ENCODE measurements at regions of chr18 and their contacts with region 1.

Region 1: DNA sequence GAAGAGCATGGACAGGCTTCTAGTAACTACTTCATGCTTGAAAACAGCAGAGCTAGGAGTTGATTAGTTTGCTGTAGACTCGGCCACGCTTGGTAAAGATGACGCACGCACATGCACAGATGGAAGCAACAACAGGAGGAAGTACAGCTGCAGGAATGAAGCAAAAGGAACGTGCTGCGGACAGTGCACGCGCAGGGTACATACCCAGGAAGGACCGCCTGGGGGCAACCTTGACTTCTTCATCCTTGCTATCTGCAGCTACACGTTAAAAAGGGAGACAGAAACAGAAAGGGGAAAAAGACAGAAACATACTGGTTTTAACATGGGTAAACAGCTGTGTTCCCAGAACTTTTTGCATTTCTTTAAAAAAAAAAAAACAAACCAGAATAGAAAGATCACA is 17.7 kb downstream of the SLC66A2 start:
- DNase-seq: peak; percentile 71
- ATAC-seq: peak; percentile 98
- H3K4me3 ChIP-seq: no peak overlapping the region
- H3K27ac ChIP-seq: no peak overlapping the region
- H3K4me1 ChIP-seq: no peaks in the 10 kb centered on the region
- H3K27me3 ChIP-seq: no peaks in the 10 kb centered on the region
- CTCF ChIP-seq: peak; percentile 61

Region 2: GRCh38 chr18:79905389-79905911 is 28.3 kb before region 1 on chr18:
- CTCF ChIA-PET with region 1: no interaction called
- POLR2A ChIA-PET with region 1: no interaction called
- intact Hi-C with region 1: no loop called
- DNase-seq: no peak
- ATAC-seq: no peak
- H3K4me3 ChIP-seq: no peak overlapping the region
- H3K27ac ChIP-seq: no peak overlapping the region
- H3K4me1 ChIP-seq: no peaks in the 10 kb centered on the region
- H3K27me3 ChIP-seq: no peaks in the 10 kb centered on the region
- CTCF ChIP-seq: no peak

Region 3: DNA sequence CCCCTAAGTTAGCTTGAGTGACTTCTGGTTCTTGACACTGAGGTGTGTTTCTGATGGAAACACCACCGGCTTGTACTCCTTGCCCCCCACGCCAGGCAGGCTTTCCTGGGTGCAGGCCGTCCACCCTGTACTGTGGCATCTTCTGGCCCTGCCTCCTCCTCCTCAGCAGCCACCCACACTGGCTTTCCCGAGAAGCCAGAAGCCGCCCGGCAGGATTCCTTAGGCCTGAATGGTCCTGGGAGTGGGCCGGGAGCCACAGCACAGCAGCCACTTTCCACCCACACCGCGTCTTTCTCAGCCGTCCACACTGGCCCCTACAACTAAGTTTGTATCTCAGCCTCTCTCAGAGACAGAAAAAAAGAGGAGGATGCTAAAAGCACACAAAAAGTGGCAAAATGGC is 28.5 kb after region 1 on chr18:
- CTCF ChIA-PET with region 1: interaction called, 10 read pairs
- POLR2A ChIA-PET with region 1: no interaction called
- intact Hi-C with region 1: loop called (anchors 2 kb)
- DNase-seq: peak; percentile 87
- ATAC-seq: peak; percentile 35
- H3K4me3 ChIP-seq: no peak overlapping the region
- H3K27ac ChIP-seq: peak overlapping the region; percentile 89
- H3K4me1 ChIP-seq: peaks cover 55% of the 10 kb centered on the region
- H3K27me3 ChIP-seq: no peaks in the 10 kb centered on the region
- CTCF ChIP-seq: no peak

Region 4: GRCh38 chr18:79973517-79973916 is 39.8 kb after region 1 on chr18:
- CTCF ChIA-PET with region 1: no interaction called
- POLR2A ChIA-PET with region 1: no interaction called
- intact Hi-C with region 1: no loop called
- DNase-seq: no peak
- ATAC-seq: no peak
- H3K4me3 ChIP-seq: no peak overlapping the region
- H3K27ac ChIP-seq: no peak overlapping the region
- H3K4me1 ChIP-seq: no peaks in the 10 kb centered on the region
- H3K27me3 ChIP-seq: no peaks in the 10 kb centered on the region
- CTCF ChIP-seq: no peak

Region 5: DNA sequence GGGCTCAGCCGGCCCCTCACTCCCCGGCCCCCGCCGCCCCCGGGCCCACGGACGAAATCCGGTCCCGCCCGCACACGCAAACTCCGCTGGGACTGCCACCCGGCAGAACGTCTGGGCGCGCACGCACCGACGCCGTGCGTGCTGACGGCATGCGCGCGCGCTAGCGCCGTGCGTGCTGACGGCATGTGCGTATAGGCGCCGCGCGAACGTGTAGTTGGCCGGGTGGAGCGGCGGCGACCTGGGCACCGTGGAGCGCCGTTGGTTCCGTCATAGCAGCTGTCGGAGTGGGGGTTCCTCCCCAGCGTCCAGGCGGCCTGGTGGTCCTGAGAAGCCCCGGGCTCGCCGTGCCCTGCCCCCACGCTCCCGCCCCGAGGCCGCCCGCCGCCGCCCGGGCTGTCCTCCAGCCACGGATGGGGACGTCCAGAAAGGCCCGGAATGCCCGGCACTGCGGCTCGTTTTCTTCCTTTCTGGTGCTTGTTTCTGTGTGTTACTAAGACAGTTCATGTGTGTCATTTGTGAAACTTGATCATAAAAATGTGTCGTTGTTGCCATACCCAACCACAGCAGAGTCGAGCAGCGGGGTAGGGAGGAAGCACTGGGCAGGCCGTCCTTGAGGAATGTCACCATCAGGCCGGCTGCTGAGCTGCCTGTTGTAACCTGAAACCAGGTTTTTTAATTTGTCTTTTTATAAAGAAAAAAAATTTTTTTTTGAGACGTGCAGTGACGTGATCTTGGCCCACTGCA is 54.9 kb after region 1 on chr18 and contains the start of gene TXNL4A:
- CTCF ChIA-PET with region 1: interaction called, 3 read pairs
- POLR2A ChIA-PET with region 1: no interaction called
- intact Hi-C with region 1: loop called (anchors 10 kb)
- DNase-seq: peak; percentile 92
- ATAC-seq: peak; percentile 96
- H3K4me3 ChIP-seq: peak within 1 kb of the TSS; percentile 90
- H3K27ac ChIP-seq: peak within 1 kb of the TSS; percentile 79
- H3K4me1 ChIP-seq: peaks cover 15% of the 10 kb centered on the region
- H3K27me3 ChIP-seq: no peaks in the 10 kb centered on the region
- CTCF ChIP-seq: no peak
- total RNA-seq, gene TXNL4A: 148 and 159 TPM in 2 replicates

Region 6: DNA sequence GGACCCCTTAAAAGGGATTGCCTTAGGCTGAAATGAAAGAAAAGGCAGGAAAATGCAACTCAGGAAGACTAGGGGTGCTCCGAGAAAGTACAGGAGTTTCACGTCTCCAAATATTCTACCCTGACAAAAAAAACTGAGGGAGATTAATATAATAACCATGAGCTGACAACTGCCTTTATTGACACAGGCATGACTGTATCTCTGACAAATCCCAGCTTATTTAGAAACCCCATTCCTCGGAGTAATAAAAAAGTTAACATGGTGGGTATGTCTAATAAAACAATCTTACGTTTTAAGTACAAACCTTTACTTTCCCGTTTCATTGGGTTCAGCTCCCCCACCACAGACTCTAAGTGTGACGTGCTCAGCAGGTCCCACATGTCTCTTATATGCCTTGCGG is 92.6 kb after region 1 on chr18:
- CTCF ChIA-PET with region 1: no interaction called
- POLR2A ChIA-PET with region 1: no interaction called
- intact Hi-C with region 1: loop called (anchors 2 kb)
- DNase-seq: peak; percentile 75
- ATAC-seq: peak; percentile 85
- H3K4me3 ChIP-seq: peak overlapping the region; percentile 45
- H3K27ac ChIP-seq: peak overlapping the region; percentile 62
- H3K4me1 ChIP-seq: peaks cover 21% of the 10 kb centered on the region
- H3K27me3 ChIP-seq: no peaks in the 10 kb centered on the region
- CTCF ChIP-seq: no peak

Region 7: DNA sequence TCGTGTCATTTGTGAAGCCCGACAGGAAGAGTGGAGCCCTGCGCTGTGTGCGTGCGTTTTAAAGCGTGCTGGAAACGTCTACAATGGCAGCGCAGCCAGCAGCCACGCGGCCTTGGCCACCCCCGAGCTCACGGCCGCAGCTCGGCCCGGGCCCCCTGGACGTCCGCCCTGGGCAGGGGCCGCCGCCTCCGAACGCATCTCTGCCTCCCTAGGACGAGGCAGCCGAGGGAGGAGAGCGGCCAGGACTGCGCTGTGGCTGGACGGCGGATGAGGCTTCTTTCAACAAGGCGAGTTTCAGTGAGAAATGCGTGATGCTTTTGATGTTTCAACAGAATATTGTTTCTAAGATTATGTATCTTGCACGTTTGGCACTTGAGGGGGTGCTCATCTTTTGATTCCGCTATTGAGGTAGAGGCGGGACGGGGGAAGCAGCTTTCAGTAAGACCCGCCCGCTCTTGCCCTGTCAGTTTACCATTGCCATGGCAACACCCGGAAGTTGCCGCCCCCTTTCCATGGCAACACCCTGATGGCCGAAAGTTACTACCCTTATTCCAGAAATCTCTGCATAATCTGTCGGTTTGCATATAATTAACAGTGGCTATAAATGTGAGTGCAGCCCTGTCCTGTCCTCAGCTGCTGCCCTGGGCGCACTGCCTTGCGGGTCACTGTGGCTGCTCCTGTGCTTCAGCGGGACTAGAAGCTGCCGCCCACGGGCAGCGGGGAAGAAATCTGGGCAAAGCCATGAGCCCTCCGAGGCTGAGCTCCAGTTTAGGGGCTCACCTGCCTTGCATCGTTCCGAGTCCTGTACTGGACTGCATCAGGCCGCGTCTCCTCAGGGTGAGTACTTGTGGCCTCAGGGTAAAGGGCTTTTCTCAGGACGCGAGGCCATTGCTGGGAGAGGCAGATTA is 213.9 kb after region 1 on chr18:
- CTCF ChIA-PET with region 1: interaction called, 3 read pairs
- POLR2A ChIA-PET with region 1: no interaction called
- intact Hi-C with region 1: loop called (anchors 5 kb)
- DNase-seq: peak; percentile 66
- ATAC-seq: peak; percentile 80
- H3K4me3 ChIP-seq: peak overlapping the region; percentile 83
- H3K27ac ChIP-seq: no peak overlapping the region
- H3K4me1 ChIP-seq: no peaks in the 10 kb centered on the region
- H3K27me3 ChIP-seq: no peaks in the 10 kb centered on the region
- CTCF ChIP-seq: no peak

Region 8: DNA sequence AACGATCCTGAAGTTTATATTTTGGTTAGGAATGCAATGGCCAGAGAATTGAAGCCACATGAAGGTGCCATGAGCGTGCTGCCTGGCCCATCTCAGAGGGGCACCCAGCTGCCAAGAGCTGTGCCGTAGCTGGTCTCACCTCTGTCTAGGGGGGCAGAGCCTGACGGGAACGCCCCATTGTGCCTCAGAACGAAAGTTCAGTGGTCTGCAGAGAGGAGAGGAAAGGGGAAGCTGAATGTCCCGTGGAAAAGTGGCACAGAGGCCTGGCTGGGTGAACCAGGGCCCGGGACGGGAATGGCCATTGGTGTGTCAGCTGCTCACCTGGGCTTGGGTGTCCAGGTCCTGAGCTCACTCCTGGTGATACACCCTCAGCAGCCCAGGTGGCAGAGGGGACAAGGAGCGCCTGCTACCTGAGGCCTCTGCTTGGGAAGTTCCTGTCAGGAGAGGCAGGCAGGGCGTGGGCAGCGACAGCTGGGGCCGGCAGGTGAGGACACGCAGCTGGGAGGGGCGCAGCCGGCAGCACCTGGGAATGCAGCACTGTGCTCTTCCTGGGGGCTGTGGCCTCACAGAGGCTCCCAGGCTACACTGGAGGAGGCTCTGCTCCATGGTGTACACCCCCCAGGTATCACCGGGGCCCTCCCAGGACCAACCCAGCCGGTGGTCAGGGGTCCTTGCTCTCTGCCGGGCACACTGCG is 246.2 kb after region 1 on chr18:
- CTCF ChIA-PET with region 1: no interaction called
- POLR2A ChIA-PET with region 1: no interaction called
- intact Hi-C with region 1: no loop called
- DNase-seq: no peak
- ATAC-seq: no peak
- H3K4me3 ChIP-seq: no peak overlapping the region
- H3K27ac ChIP-seq: no peak overlapping the region
- H3K4me1 ChIP-seq: no peaks in the 10 kb centered on the region
- H3K27me3 ChIP-seq: no peaks in the 10 kb centered on the region
- CTCF ChIP-seq: no peak